ENCODE measurements at regions of chr12 and their contacts with region 1.

Region 1: GRCh38 chr12:126570566-126570965 is 1505.3 kb downstream of the AACS start:
- DNase-seq: no peak
- ATAC-seq: no peak
- H3K4me3 ChIP-seq: no peak overlapping the region
- H3K4me3 Mint-ChIP-seq: no peak overlapping the region
- H3K27ac ChIP-seq: no peak overlapping the region
- H3K27ac Mint-ChIP-seq: no peak overlapping the region
- H3K4me1 ChIP-seq: no peaks in the 10 kb centered on the region
- H3K4me1 Mint-ChIP-seq: no peaks in the 10 kb centered on the region
- H3K27me3 ChIP-seq: no peaks in the 10 kb centered on the region
- H3K27me3 Mint-ChIP-seq: no peaks in the 10 kb centered on the region
- CTCF ChIP-seq: no peak

Region 2: DNA sequence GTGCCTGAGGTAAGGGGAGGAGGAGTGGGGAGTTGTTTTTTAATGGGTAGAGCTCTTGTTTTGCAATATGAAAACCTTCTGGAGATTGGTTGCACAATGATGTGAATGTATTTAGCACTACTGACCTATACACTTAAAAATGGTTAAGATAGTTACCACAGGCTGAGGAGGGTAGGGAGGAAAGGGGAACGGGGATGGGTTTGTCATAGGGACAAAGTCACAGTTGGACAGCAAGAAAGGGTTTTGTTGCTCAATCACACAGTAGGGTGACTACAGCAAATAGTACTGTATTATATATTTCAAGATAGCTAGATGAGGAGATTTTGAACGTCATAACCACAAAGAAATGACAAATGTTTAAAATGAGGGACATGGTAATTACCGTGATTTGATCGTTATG is 57.0 kb after region 1 on chr12:
- CTCF ChIA-PET with region 1: no interaction called
- POLR2A ChIA-PET with region 1: no interaction called
- intact Hi-C with region 1: loop called in 1 of 2 experiments (anchors 10 kb)
- DNase-seq: no peak
- ATAC-seq: no peak
- H3K4me3 ChIP-seq: no peak overlapping the region
- H3K4me3 Mint-ChIP-seq: no peak overlapping the region
- H3K27ac ChIP-seq: no peak overlapping the region
- H3K27ac Mint-ChIP-seq: no peak overlapping the region
- H3K4me1 ChIP-seq: no peaks in the 10 kb centered on the region
- H3K4me1 Mint-ChIP-seq: no peaks in the 10 kb centered on the region
- H3K27me3 ChIP-seq: no peaks in the 10 kb centered on the region
- H3K27me3 Mint-ChIP-seq: no peaks in the 10 kb centered on the region
- CTCF ChIP-seq: no peak

Region 3: GRCh38 chr12:127108360-127109215 is 538.0 kb after region 1 on chr12:
- CTCF ChIA-PET with region 1: no interaction called
- POLR2A ChIA-PET with region 1: no interaction called
- intact Hi-C with region 1: no loop called
- DNase-seq: peak in 12 of 14 experiments; percentile 12 to 50 (median 26)
- ATAC-seq: no peak
- H3K4me3 ChIP-seq: no peak overlapping the region
- H3K4me3 Mint-ChIP-seq: no peak overlapping the region
- H3K27ac ChIP-seq: no peak overlapping the region
- H3K27ac Mint-ChIP-seq: no peak overlapping the region
- H3K4me1 ChIP-seq: no peaks in the 10 kb centered on the region
- H3K4me1 Mint-ChIP-seq: no peaks in the 10 kb centered on the region
- H3K27me3 ChIP-seq: no peaks in the 10 kb centered on the region
- H3K27me3 Mint-ChIP-seq: peaks cover 33% of the 10 kb centered on the region
- CTCF ChIP-seq: peak; percentile 59